H1 (cell line): ENCODE measurements at regions of chr15 and their contacts with region 1.

Region 1: GRCh38 chr15:69452692-69453521 is at the start of gene RPLP1:
- DNase-seq: peak; percentile 88 to 98
- H3K4me3 ChIP-seq: peak within 1 kb of the TSS; percentile 68 to 98 (median 92)
- H3K27ac ChIP-seq: peak within 1 kb of the TSS; percentile 53; the same call in 1 of the 2 replicates
- H3K4me1 ChIP-seq: peaks cover 0 to 7% (median 1%) of the 10 kb centered on the region in 4 experiments; a peak in 3 of 7 replicates
- H3K27me3 ChIP-seq: no peaks in the 10 kb centered on the region
- CTCF ChIP-seq: no peak
- EP300 ChIP-seq: no peak
- POLR2A ChIP-seq: peak; percentile 100
- RAD21 ChIP-seq: no peak
- total RNA-seq, gene RPLP1: 2,089 and 2,151 TPM in 2 replicates

Region 2: GRCh38 chr15:69117431-69117871 is 335.5 kb before region 1 on chr15:
- CTCF ChIA-PET with region 1: no interaction called
- POLR2A ChIA-PET with region 1: interaction called, 10 read pairs
- DNase-seq: peak; percentile 38 to 59
- H3K4me3 ChIP-seq: peak overlapping the region in 3 of 4 experiments; percentile 15 to 38 (median 34); a peak in 5 of 8 replicates
- H3K27ac ChIP-seq: no peak overlapping the region
- H3K4me1 ChIP-seq: peaks cover 28 to 46% (median 35%) of the 10 kb centered on the region in 4 experiments
- H3K27me3 ChIP-seq: peaks cover 0 to 31% (median 19%) of the 10 kb centered on the region in 4 experiments; a peak in 6 of 7 replicates
- CTCF ChIP-seq: no peak
- EP300 ChIP-seq: no peak
- POLR2A ChIP-seq: no peak
- RAD21 ChIP-seq: no peak; a peak in 1 of 4 replicates

Region 3: DNA sequence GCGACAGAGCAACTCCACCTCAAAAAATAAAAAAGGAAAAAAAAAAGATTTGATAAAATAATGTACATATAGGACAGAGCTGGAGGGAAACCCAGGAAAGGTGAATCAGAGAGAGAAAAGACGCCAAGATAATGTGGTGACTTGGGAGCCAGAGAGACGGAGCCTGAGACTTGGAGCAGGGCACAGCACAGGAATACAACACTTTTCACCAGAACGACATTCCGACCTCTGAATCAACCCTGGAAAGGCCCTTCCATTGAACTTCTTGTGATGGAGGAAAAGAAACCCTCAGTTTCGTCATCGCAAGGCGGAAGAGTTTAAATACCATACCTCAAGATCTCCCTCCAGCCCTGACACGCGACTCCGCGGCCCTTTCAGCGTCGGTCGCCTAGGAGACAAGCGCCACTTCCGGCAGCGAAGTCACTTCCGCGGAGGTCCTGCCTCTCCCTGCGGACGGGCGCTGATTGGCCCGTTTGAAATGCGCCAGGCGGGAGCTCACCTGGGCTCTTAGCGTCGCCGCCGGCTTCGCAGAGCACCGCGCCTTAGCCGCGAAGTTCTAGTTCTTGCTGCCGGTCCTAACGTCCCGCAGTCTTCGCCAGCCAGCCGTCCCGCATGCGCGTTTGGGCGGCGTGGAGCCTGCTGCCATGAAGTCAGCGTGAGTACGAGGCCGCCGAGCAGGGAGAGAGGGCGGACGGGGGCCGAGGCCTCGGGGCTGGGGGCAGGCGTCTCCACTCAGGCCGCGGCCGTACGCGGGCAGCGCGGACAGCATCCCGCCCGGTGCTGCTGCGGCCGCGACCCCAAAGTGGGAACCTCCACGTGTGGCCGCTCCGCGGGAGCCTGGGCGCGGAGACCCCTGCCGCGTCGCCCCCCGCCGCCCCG is 38.8 kb before region 1 on chr15 and contains the start of gene KIF23:
- CTCF ChIA-PET with region 1: no interaction called
- POLR2A ChIA-PET with region 1: interaction called, 97 read pairs
- DNase-seq: peak; percentile 84 to 90
- H3K4me3 ChIP-seq: peak within 1 kb of the TSS; percentile 81 to 95 (median 88)
- H3K27ac ChIP-seq: peak within 1 kb of the TSS; percentile 53; the same call in 1 of the 2 replicates
- H3K4me1 ChIP-seq: peaks cover 0 to 2% (median under 1%) of the 10 kb centered on the region in 4 experiments; a peak in 2 of 7 replicates
- H3K27me3 ChIP-seq: no peaks in the 10 kb centered on the region
- CTCF ChIP-seq: no peak
- EP300 ChIP-seq: no peak
- POLR2A ChIP-seq: peak; percentile 76; a peak in 2 of 3 replicates
- RAD21 ChIP-seq: no peak
- total RNA-seq, gene KIF23: 77.2 and 77.4 TPM in 2 replicates

Region 4: DNA sequence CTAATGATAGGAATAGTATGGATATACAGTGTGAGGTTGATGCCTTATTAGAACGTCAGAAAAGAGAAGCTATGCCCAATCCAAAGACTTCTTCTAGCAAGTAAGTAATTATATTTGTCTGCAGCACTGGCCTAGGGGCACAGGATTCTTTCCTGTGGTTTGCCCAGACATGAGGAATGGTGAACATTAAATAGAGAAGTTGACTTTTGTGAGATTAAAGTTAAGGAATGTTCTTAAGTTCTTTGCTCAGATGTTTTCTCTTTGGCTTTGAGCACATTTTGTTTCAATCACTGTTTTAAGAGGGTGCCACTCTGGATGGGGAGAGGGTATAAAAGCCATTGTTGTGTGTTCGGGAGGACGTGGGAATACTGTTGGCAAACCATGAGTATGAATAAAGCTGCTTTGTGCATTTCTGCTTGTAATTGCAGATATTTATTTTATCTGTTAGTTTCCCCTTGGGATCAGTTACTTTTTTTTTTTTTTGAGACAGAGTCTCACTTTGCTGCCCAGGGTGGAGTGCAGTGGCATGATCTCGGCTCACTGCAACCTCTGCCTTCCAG is 30.5 kb before region 1 on chr15:
- CTCF ChIA-PET with region 1: no interaction called
- POLR2A ChIA-PET with region 1: interaction called, 97 read pairs
- DNase-seq: no peak
- H3K4me3 ChIP-seq: no peak overlapping the region
- H3K27ac ChIP-seq: no peak overlapping the region
- H3K4me1 ChIP-seq: no peaks in the 10 kb centered on the region
- H3K27me3 ChIP-seq: no peaks in the 10 kb centered on the region
- CTCF ChIP-seq: no peak
- EP300 ChIP-seq: no peak
- POLR2A ChIP-seq: no peak
- RAD21 ChIP-seq: no peak

Region 5: GRCh38 chr15:69434236-69434635 is 18.7 kb before region 1 on chr15:
- CTCF ChIA-PET with region 1: interaction called, 6 read pairs
- POLR2A ChIA-PET with region 1: interaction called, 42 read pairs
- DNase-seq: no peak
- H3K4me3 ChIP-seq: no peak overlapping the region
- H3K27ac ChIP-seq: no peak overlapping the region
- H3K4me1 ChIP-seq: no peaks in the 10 kb centered on the region; a peak in 1 of 7 replicates
- H3K27me3 ChIP-seq: no peaks in the 10 kb centered on the region
- CTCF ChIP-seq: no peak
- EP300 ChIP-seq: no peak
- POLR2A ChIP-seq: no peak
- RAD21 ChIP-seq: no peak

Region 6: DNA sequence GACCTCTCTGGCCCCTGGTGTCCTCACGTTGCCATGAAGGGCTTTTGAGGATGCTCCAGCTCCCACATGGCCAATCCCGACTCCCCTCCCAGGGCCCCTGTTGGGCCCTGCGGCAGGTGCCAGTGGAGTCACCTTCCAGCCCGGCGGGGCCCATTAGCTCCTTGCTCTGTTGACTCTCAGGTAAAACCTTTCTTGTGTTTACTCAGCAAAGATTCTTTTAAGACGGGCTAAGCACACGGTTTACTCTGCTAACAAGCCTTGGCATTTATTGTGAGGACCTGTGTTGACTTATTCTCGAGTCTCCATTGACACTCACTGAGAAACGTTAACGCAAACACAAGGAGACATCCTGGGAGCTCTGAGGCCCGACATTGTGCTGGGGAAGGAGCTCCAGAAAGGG is 14.8 kb after region 1 on chr15:
- CTCF ChIA-PET with region 1: interaction called, 20 read pairs
- POLR2A ChIA-PET with region 1: interaction called, 207 read pairs
- DNase-seq: peak in 1 of 2 experiments; percentile 31
- H3K4me3 ChIP-seq: no peak overlapping the region
- H3K27ac ChIP-seq: no peak overlapping the region
- H3K4me1 ChIP-seq: peaks cover 0 to 4% (median 1%) of the 10 kb centered on the region in 4 experiments; a peak in 1 of 7 replicates
- H3K27me3 ChIP-seq: no peaks in the 10 kb centered on the region
- CTCF ChIP-seq: no peak
- EP300 ChIP-seq: no peak
- POLR2A ChIP-seq: no peak
- RAD21 ChIP-seq: no peak

Region 7: GRCh38 chr15:69568173-69569020 is 115.5 kb after region 1 on chr15:
- CTCF ChIA-PET with region 1: no interaction called
- POLR2A ChIA-PET with region 1: no interaction called
- DNase-seq: no peak
- H3K4me3 ChIP-seq: no peak overlapping the region
- H3K27ac ChIP-seq: no peak overlapping the region
- H3K4me1 ChIP-seq: no peaks in the 10 kb centered on the region
- H3K27me3 ChIP-seq: no peaks in the 10 kb centered on the region
- CTCF ChIP-seq: no peak
- EP300 ChIP-seq: no peak
- POLR2A ChIP-seq: no peak
- RAD21 ChIP-seq: no peak

Region 8: GRCh38 chr15:69666411-69666882 is 213.5 kb after region 1 on chr15:
- CTCF ChIA-PET with region 1: no interaction called
- POLR2A ChIA-PET with region 1: no interaction called
- DNase-seq: no peak
- H3K4me3 ChIP-seq: no peak overlapping the region
- H3K27ac ChIP-seq: no peak overlapping the region
- H3K4me1 ChIP-seq: peaks cover 0 to 12% (median 6%) of the 10 kb centered on the region in 4 experiments; a peak in 5 of 7 replicates
- H3K27me3 ChIP-seq: 0 out of 7 replicates have a peak, but pooled peaks cover 0 to 2% (median 0%) of the 10 kb centered on the region in 4 experiments
- CTCF ChIP-seq: no peak
- EP300 ChIP-seq: no peak
- POLR2A ChIP-seq: no peak
- RAD21 ChIP-seq: no peak